AG04450 (cell line): ENCODE measurements at regions of chr11 and their contacts with region 1.

Region 1: DNA sequence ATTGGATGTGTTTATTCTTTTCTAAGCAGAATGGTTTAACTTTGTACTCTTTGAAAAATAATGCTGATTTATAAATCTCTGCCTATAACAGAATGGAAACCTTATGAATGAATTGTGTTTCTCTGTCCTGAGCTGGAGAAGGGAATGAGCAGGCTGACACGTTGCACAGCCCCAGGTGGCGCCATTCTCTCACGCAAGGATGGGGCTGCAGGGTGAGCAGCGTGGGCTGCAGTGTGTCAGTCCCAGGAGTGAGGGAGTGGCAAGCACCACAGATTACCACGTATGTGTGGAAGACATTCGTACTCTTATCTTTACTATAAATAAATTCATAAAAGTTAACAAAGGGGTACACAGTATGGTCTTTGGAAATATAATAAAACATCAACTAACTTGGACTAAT is 33.4 kb downstream of the FDX1 start:
- DNase-seq: peak; percentile 24
- H3K4me3 ChIP-seq: no peak overlapping the region
- H3K27ac ChIP-seq: no peak overlapping the region
- H3K27me3 ChIP-seq: no peaks in the 10 kb centered on the region
- CTCF ChIP-seq: peak; percentile 66

Region 2: GRCh38 chr11:110738641-110739040 is 275.5 kb after region 1 on chr11:
- CTCF ChIA-PET with region 1: no interaction called
- POLR2A ChIA-PET with region 1: no interaction called
- DNase-seq: no peak
- H3K4me3 ChIP-seq: no peak overlapping the region
- H3K27ac ChIP-seq: no peak overlapping the region
- H3K27me3 ChIP-seq: peaks cover 2% of the 10 kb centered on the region
- CTCF ChIP-seq: no peak

Region 3: DNA sequence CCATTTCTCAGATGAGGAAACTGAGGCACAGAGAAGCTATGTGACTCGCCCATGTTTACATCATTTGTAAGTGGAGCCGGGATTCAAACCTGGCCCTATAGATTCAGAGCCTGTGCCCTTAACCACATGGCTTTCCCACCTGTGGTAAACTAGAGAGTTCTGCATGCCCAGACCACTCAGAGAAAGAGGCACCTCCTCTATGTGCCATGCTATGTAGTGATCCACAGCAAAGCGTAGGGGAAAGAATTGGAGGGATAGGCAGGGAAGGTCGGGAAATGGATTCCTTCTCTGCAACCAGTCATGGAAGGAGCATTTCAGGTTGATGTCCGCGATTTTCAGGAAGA is 766.9 kb after region 1 on chr11:
- CTCF ChIA-PET with region 1: interaction called, 14 read pairs
- POLR2A ChIA-PET with region 1: no interaction called
- DNase-seq: no peak
- H3K4me3 ChIP-seq: no peak overlapping the region
- H3K27ac ChIP-seq: no peak overlapping the region
- H3K27me3 ChIP-seq: no peaks in the 10 kb centered on the region
- CTCF ChIP-seq: no peak

Region 4: GRCh38 chr11:111320728-111321568 is 857.8 kb after region 1 on chr11:
- CTCF ChIA-PET with region 1: interaction called, 10 read pairs
- POLR2A ChIA-PET with region 1: no interaction called
- DNase-seq: no peak
- H3K4me3 ChIP-seq: no peak overlapping the region
- H3K27ac ChIP-seq: no peak overlapping the region
- H3K27me3 ChIP-seq: peaks cover 18% of the 10 kb centered on the region
- CTCF ChIP-seq: no peak